ENCODE measurements at regions of chr1 and their contacts with region 1.

Region 1: GRCh38 chr1:109910123-109910962 is at the start of gene CSF1:
- DNase-seq: peak; percentile 89
- ATAC-seq: peak; percentile 82
- total RNA-seq, gene CSF1: 19.0 TPM

Region 2: GRCh38 chr1:109790735-109791494 is 119.4 kb before region 1 on chr1:
- intact Hi-C with region 1: loop called (anchors 5 kb)
- DNase-seq: no peak
- ATAC-seq: peak; percentile 41

Region 3: DNA sequence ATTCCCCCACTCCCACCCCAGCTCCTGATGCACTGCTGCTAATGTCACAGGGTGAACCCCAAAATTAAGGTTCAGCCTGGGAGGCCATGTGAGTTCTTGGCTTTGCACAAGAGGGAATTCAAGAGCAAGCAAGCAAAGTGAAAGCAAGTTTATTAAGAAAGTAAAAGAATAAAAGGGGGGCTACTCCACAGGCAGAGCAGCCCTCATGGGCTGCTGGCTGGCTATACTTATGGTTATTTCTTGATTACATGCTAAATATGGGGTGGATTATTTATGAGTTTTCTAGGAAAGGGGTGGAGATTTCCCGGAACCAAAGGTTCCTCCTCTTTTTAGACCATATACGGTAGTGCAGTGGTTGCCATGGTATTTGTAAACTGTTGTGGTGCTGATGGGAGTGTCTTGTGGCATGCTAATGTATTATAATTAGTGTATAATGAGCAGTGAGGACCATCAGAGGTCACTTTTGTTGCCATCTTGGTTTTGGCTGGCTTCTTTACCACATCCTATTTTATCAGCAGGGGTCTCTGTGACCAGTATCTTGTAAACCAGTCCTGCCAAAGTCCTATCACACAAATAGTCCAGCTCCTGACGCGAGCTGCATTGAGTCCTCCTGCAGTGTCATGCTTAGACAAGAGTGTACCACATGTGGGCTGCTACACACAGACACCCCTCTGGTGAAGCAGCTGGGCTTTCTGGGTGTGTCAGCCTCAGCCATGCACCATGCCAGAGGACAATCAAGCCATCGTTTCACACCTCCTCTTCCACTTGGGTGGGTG is 46.1 kb before region 1 on chr1:
- intact Hi-C with region 1: loop called (anchors 5 kb)
- DNase-seq: no peak
- ATAC-seq: no peak

Region 4: DNA sequence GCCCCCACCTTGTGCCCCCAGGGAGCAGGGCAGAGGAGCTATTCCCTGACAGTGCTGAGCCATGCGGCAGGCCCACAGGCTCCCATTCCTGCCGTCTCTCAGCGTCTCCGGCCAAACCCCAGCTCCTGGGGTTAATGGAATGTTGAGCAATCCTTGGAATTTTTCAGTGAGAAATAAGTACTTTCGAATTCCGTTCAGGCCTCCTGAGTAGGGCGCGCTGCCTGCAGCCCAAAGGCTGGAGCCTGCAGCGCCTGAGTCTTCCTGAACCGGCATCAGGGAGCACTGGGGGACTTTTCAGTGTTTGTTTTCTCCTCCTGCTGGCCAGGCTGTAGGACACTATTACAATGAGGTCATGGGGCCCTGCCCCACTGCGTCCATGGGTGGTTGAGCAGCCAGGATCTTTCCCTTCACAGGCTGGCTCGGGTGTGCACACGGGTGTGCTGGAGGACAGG is 33.0 kb before region 1 on chr1:
- intact Hi-C with region 1: loop called (anchors 5 kb)
- DNase-seq: peak; percentile 86
- ATAC-seq: peak; percentile 97

Region 5: DNA sequence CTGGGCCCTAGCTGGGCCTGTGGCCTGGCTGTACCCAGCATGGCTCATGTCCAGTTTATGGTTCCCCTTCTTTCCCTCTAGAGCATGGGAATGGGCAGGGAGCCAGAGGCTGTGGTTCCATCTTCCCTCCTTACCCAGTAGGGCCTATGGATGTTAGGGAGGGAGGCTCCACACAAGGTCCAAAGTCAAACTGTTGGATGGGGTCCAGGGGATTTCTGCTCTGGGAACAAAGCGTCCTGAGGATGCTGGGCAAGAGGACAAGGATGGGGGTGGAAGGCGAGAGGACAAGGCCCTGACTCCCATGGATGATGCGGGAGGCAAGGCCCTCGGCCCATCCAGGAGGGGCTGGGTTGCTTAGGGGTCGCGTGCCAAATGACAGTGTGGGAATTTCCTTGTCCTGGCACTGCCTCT is 17.6 kb after region 1 on chr1:
- intact Hi-C with region 1: loop called (anchors 2 kb)
- DNase-seq: peak; percentile 86
- ATAC-seq: peak; percentile 73

Measured in Right ventricle myocardium inferior (tissue), 1 donor.